ENCODE measurements at regions of chr5 and their contacts with region 1.

Region 1: GRCh38 chr5:79056847-79057246 is 12.6 kb downstream of the DMGDH start:
- DNase-seq: no peak
- H3K27ac ChIP-seq: no peak overlapping the region
- CTCF ChIP-seq: no peak

Region 2: GRCh38 chr5:79074641-79075040 is 17.8 kb after region 1 on chr5:
- CTCF ChIA-PET with region 1: interaction called, 12 read pairs
- POLR2A ChIA-PET with region 1: no interaction called
- DNase-seq: peak; percentile 59
- H3K27ac ChIP-seq: no peak overlapping the region
- CTCF ChIP-seq: no peak